Heart right ventricle (tissue), 16 donors: ENCODE measurements at regions of chr18 and their contacts with region 1.

Region 1: GRCh38 chr18:61544178-61544577 is 210.9 kb downstream of the CDH20 start:
- DNase-seq: no peak
- ATAC-seq: peak in 6 of 8 donors; percentile 57 to 95 (median 68)
- H3K4me3 ChIP-seq: no peak overlapping the region
- H3K27ac ChIP-seq: peak overlapping the region in 4 of 10 donors; percentile 4 to 63 (median 42)
- H3K4me1 ChIP-seq: peaks cover 0 to 31% (median 10%) of the 10 kb centered on the region in 9 donors
- H3K27me3 ChIP-seq: no peaks in the 10 kb centered on the region
- CTCF ChIP-seq: no peak

Region 2: DNA sequence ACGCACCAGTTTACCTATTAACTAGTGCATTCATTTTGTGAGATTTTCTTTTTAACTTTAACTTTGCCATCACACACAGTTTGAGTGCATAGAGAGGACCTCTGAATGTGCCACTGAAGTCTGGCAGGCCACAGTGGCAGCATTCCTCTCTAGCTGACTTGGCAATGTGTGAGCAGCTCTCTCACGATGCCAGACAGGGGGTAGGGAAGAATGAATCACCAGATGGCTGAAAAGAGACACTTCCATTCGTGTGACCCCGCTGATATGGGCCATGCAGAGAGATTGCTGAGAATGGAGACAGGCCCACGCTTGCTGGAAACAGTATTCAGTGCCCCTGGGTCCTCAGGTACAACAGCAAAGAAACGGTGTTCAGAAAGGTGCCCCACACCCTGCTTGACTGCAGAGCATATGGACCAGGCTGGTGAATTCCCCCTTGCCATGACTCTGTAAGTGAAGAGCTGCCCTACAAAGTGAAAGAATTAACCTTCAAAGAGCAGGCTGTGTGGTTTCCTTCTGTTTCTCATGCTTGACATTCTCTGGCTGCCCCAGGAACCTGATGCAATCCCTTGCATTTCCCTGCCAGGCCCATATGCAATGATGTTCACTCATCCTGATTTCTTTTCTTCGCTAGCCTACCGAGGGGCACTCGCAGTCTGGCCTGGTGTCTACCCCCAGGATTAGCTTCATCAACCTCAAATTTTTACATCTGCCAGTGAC is 25.2 kb after region 1 on chr18:
- intact Hi-C with region 1: loop called in 1 of 10 experiments (anchors 1 kb)
- DNase-seq: peak; percentile 46 to 63
- ATAC-seq: peak; percentile 90 to 99 (median 96)
- H3K4me3 ChIP-seq: no peak overlapping the region
- H3K27ac ChIP-seq: peak overlapping the region; percentile 4 to 83 (median 68)
- H3K4me1 ChIP-seq: peaks cover 0 to 19% (median 0%) of the 10 kb centered on the region in 9 donors
- H3K27me3 ChIP-seq: no peaks in the 10 kb centered on the region
- CTCF ChIP-seq: no peak